ENCODE measurements at regions of chr11 and their contacts with region 1.

Region 1: GRCh38 chr11:37621662-37622061 is 1023.6 kb upstream of the RAG2 start:
- DNase-seq: no peak
- H3K4me3 ChIP-seq: no peak overlapping the region
- H3K27ac ChIP-seq: no peak overlapping the region
- H3K4me1 ChIP-seq: no peaks in the 10 kb centered on the region
- H3K27me3 ChIP-seq: no peaks in the 10 kb centered on the region
- CTCF ChIP-seq: no peak
- EP300 ChIP-seq: no peak
- POLR2A ChIP-seq: no peak

Region 2: DNA sequence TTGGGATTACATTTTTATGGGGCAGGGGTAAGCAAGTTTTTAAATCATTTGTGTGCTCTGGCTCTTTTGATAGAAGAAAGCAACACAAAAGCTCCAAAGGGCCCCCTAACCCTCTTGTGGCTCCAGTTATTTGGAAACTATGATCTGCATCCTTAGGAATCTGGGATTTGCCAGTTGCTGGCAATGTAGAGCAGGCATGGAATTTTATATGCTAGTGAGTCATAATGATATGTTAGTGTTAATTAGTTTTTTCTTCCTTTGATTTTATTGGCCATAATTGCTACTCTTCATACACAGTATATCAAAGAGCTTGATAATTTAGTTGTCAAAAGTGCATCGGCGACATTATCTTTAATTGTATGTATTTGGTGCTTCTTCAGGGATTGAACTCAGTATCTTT is 1043.8 kb before region 1 on chr11:
- in situ Hi-C with region 1: no loop called
- intact Hi-C with region 1: loop called (anchors 5 kb)
- DNase-seq: no peak
- H3K4me3 ChIP-seq: no peak overlapping the region
- H3K27ac ChIP-seq: peak overlapping the region in 2 of 4 donors; percentile 22 to 26
- H3K4me1 ChIP-seq: no peaks in the 10 kb centered on the region
- H3K27me3 ChIP-seq: no peaks in the 10 kb centered on the region
- CTCF ChIP-seq: no peak
- EP300 ChIP-seq: no peak
- POLR2A ChIP-seq: no peak